IMR-90 (cell line): ENCODE measurements at regions of chr9 and their contacts with region 1.

Region 1: GRCh38 chr9:130017076-130017475 is 25.9 kb downstream of the FNBP1 start:
- DNase-seq: peak; percentile 27
- ATAC-seq: peak; percentile 49
- H3K4me3 ChIP-seq: no peak overlapping the region
- H3K27ac ChIP-seq: no peak overlapping the region
- H3K4me1 ChIP-seq: peaks cover 5% of the 10 kb centered on the region; the same call in 1 of the 2 replicates
- H3K27me3 ChIP-seq: peaks cover 2% of the 10 kb centered on the region; the same call in 1 of the 2 replicates
- CTCF ChIP-seq: no peak
- POLR2A ChIP-seq: no peak
- RAD21 ChIP-seq: no peak

Region 2: GRCh38 chr9:129983891-129984290 is 33.2 kb before region 1 on chr9:
- CTCF ChIA-PET with region 1: no interaction called
- POLR2A ChIA-PET with region 1: no interaction called
- dilution Hi-C with region 1: no loop called
- in situ Hi-C with region 1: no loop called
- intact Hi-C with region 1: no loop called
- DNase-seq: no peak
- ATAC-seq: no peak
- H3K4me3 ChIP-seq: no peak overlapping the region
- H3K27ac ChIP-seq: no peak overlapping the region
- H3K4me1 ChIP-seq: peaks cover under 1% of the 10 kb centered on the region; the same call in 1 of the 2 replicates
- H3K27me3 ChIP-seq: no peaks in the 10 kb centered on the region
- CTCF ChIP-seq: no peak
- POLR2A ChIP-seq: no peak
- RAD21 ChIP-seq: no peak

Region 3: GRCh38 chr9:129994882-129995281 is 22.2 kb before region 1 on chr9:
- CTCF ChIA-PET with region 1: no interaction called
- POLR2A ChIA-PET with region 1: interaction called, 10 read pairs
- dilution Hi-C with region 1: no loop called
- in situ Hi-C with region 1: no loop called
- intact Hi-C with region 1: no loop called
- DNase-seq: no peak
- ATAC-seq: no peak
- H3K4me3 ChIP-seq: no peak overlapping the region
- H3K27ac ChIP-seq: no peak overlapping the region
- H3K4me1 ChIP-seq: peaks cover 13% of the 10 kb centered on the region
- H3K27me3 ChIP-seq: no peaks in the 10 kb centered on the region
- CTCF ChIP-seq: no peak
- POLR2A ChIP-seq: no peak
- RAD21 ChIP-seq: no peak